ENCODE measurements at regions of chr4 and their contacts with region 1.

Region 1: DNA sequence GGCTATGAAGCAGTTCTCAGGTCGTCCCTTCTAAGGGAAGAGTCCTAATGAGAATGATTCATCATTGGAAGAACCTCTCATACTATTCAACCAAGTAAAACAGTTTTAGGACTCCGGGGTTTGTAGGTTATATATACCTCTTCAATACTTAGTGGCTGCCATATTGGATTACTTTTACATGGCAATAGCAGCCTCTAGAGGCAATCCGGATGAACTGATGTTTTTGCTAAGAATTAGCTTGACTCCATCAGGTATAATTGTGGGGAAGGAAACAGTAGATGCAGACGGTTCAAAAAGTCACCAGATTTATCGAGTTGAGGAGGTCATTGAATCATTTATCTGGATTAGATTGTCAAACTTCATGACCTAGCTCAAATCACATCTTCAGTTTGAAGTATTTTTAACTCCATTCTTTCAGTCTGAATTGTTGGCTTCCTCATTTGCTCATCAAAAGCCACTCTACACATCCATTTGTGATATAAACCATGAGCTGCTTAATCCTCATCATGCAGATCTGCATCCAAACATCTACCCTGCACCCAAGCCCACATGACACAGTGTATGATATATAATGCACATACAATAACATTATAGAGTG is 28.4 kb downstream of the GUCY1B1 start:
- DNase-seq: peak; percentile 65
- H3K4me3 ChIP-seq: no peak overlapping the region; a peak in 1 of 4 replicates
- H3K27ac ChIP-seq: no peak overlapping the region
- H3K4me1 ChIP-seq: no peaks in the 10 kb centered on the region; a peak in 1 of 4 replicates
- H3K27me3 ChIP-seq: no peaks in the 10 kb centered on the region
- CTCF ChIP-seq: peak; percentile 87
- EP300 ChIP-seq: no peak
- RAD21 ChIP-seq: peak; percentile 96

Region 2: GRCh38 chr4:155442267-155443105 is 344.7 kb before region 1 on chr4:
- CTCF ChIA-PET with region 1: interaction called, 21 read pairs
- POLR2A ChIA-PET with region 1: no interaction called
- DNase-seq: peak; percentile 55
- H3K4me3 ChIP-seq: peak overlapping the region in 1 of 2 experiments; percentile 1; a peak in 1 of 4 replicates
- H3K27ac ChIP-seq: peak overlapping the region in 1 of 2 experiments; percentile 34; a peak in 1 of 4 replicates
- H3K4me1 ChIP-seq: no peaks in the 10 kb centered on the region
- H3K27me3 ChIP-seq: no peaks in the 10 kb centered on the region
- CTCF ChIP-seq: peak; percentile 96
- EP300 ChIP-seq: no peak
- RAD21 ChIP-seq: peak; percentile 91

Measured in SK-N-SH (cell line).